ENCODE measurements at regions of chr2 and their contacts with region 1.

Region 1: DNA sequence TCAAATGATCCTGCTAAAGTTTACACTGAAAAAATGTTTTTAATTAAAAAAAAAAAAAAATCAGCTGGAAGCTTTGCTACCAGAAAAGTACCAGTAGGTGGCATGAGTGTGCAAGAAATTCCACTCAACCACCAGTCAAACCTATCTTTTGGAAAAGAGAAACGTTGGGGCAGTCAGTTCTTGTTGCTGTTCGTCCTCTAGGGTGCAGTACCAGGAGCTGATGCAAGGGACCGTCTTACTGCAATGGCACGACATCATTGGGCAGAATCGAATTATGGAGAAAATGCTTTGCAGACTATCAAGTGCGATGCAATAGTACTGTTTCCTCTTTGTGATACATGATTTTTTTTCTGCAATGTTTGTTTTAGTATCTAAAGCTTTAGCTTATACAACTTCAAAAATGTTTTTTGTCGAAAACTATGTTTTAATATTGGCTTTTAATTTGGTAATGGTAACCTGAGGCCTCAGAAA is 18.3 kb downstream of the YPEL5 start:
- DNase-seq: peak in 3 of 5 donors; percentile 30 to 62 (median 41)
- H3K4me3 ChIP-seq: no peak overlapping the region
- H3K27ac ChIP-seq: no peak overlapping the region
- H3K4me1 ChIP-seq: no peaks in the 10 kb centered on the region
- H3K27me3 ChIP-seq: no peaks in the 10 kb centered on the region
- CTCF ChIP-seq: peak; percentile 78 to 85 (median 79)
- EP300 ChIP-seq: no peak
- POLR2A ChIP-seq: no peak

Region 2: DNA sequence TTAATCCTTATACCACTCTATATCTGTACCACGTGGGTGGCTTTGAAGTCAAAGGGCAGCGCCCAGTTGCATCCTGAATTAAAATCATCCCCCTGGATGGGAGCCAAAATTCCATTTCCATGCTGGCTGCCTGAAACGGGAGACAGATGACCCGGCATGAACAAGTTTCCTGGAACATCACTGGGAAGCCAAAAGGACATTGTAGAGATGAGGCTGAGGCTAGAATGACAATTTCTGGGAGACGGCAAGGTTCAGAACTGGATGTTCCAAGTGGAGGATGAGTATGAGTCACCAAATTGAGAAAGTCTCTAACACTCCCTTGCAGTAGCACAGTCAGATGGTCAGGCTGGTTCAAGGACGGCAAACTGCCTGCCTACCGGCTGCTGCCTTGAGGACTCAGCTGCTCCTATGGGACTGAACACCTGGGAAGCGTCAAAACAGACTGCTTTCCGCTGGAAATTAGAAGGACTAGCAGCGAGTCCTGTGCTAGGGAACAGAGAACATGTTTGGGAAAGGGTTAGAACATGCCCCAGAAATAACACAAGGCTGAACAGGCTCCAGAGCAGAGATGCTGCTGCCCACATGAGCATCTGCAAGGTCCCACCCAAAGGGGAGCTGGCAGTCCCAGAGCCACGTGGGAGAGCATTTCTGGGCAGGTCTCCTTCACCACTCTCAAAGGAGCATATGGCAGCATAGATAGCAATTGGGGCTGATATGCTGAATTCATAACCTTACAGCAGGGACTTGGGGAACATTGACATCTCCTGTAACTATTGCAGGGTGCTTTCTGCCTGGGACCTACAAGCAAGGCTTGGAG is 13.7 kb after region 1 on chr2:
- intact Hi-C with region 1: no loop called
- DNase-seq: peak; percentile 50 to 92 (median 84)
- H3K4me3 ChIP-seq: no peak overlapping the region
- H3K27ac ChIP-seq: no peak overlapping the region
- H3K4me1 ChIP-seq: peaks cover 7% of the 10 kb centered on the region
- H3K27me3 ChIP-seq: no peaks in the 10 kb centered on the region
- CTCF ChIP-seq: no peak
- EP300 ChIP-seq: peak; percentile 98
- POLR2A ChIP-seq: no peak

Region 3: GRCh38 chr2:30208452-30208851 is 43.4 kb after region 1 on chr2:
- intact Hi-C with region 1: loop called in 2 of 4 experiments (anchors 5 to 10 kb)
- DNase-seq: peak; percentile 60 to 79 (median 72)
- H3K4me3 ChIP-seq: no peak overlapping the region
- H3K27ac ChIP-seq: no peak overlapping the region
- H3K4me1 ChIP-seq: peaks cover 1% of the 10 kb centered on the region
- H3K27me3 ChIP-seq: no peaks in the 10 kb centered on the region
- CTCF ChIP-seq: peak; percentile 85 to 95 (median 90)
- EP300 ChIP-seq: no peak
- POLR2A ChIP-seq: no peak

Region 4: GRCh38 chr2:30217644-30218337 is 52.7 kb after region 1 on chr2:
- intact Hi-C with region 1: loop called in 1 of 4 experiments (anchors 10 kb)
- DNase-seq: no peak
- H3K4me3 ChIP-seq: no peak overlapping the region
- H3K27ac ChIP-seq: no peak overlapping the region
- H3K4me1 ChIP-seq: no peaks in the 10 kb centered on the region
- H3K27me3 ChIP-seq: no peaks in the 10 kb centered on the region
- CTCF ChIP-seq: no peak
- EP300 ChIP-seq: no peak
- POLR2A ChIP-seq: no peak

Region 5: DNA sequence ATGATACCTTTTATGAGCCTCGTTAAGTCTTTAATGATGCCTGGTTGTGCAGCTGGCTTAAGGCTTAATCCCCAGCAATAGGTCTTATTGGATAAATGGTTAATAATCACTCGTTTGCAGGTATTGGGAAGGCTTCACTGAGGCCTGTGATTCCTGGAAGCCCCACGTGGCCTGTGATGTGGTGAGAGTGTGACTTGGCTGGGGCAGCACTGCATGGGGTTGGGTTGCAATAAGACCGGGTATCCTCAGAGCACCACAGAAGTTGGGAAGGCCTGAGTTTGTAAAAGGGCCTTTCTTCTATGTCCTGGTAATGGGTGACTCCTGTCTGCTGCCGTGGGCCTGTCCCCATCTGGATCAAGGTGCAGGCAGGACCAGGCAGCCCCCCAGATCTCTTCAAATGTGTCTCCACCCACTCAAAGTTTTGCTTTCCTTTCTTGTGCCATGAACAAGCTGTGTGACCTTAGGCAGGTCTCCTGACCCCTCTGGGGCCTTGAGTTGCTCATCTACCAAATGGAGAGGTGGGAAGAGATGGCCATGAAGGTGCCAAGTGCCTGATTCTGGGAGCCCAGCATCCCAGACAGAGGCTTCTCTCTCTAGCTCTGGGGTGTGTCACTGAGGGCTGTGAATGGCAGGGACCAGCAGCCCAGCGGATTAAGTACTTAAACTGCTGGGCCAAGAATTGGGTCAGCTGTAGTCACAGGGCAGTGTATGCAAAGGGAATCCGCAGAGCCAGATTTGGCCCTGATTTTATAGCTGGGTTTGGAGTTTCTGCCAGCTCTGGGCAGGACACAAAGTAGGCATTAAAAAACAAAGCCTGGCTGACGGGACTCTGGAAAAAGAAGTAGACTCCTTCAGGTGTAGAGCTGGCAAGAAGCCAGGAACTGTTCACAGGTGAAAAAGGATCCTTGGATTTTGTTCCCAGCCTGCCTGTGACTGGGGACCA is 90.7 kb after region 1 on chr2:
- intact Hi-C with region 1: no loop called
- DNase-seq: no peak
- H3K4me3 ChIP-seq: no peak overlapping the region
- H3K27ac ChIP-seq: no peak overlapping the region
- H3K4me1 ChIP-seq: peaks cover 18% of the 10 kb centered on the region
- H3K27me3 ChIP-seq: no peaks in the 10 kb centered on the region
- CTCF ChIP-seq: no peak
- EP300 ChIP-seq: no peak
- POLR2A ChIP-seq: no peak

Region 6: GRCh38 chr2:30611583-30611982 is 446.5 kb after region 1 on chr2:
- intact Hi-C with region 1: no loop called
- DNase-seq: no peak
- H3K4me3 ChIP-seq: no peak overlapping the region
- H3K27ac ChIP-seq: no peak overlapping the region
- H3K4me1 ChIP-seq: no peaks in the 10 kb centered on the region
- H3K27me3 ChIP-seq: no peaks in the 10 kb centered on the region
- CTCF ChIP-seq: no peak
- EP300 ChIP-seq: no peak
- POLR2A ChIP-seq: no peak

Measured in ovary (tissue), 10 donors.